ENCODE measurements at regions of chr6 and their contacts with region 1.

Region 1: DNA sequence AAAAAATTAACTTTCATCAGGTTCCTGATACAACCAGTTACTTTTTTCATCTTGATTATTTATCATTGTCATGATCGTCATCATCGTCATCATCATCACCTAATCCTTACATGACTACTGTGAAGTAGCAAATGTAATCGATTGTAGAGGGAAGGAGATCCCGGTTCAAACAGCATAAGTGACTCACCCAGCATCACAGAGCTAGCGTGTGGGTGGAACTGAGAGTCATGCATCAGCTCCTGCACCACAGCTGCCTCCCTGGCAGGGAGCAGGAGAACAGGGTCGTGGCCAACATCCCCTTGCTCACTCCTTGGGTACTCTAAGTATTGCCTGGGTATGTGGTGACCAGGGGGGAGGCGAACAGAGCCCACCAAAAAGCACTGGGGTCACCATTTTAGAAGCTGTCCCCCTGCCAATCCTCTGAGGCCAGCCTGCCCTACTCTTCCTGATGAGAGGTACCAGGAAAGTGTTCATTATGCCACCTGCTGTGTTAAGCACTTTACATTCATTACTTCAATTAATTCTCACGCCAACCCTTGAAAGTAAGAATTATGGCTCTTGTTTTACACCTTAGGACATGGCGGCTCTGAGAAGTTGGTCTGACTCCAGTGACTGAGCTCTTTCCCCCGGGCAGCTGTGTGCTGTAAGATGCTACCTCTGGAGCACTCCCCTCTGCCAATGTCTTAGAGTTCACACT is 425.2 kb downstream of the CD83 start:
- DNase-seq: peak; percentile 92
- H3K4me3 Mint-ChIP-seq: no peak overlapping the region
- H3K27ac Mint-ChIP-seq: peak overlapping the region; percentile 64
- H3K4me1 Mint-ChIP-seq: peaks cover 24% of the 10 kb centered on the region
- H3K27me3 Mint-ChIP-seq: no peaks in the 10 kb centered on the region

Region 2: GRCh38 chr6:14276667-14277404 is 266.0 kb before region 1 on chr6:
- CTCF ChIA-PET with region 1: no interaction called
- intact Hi-C with region 1: loop called (anchors 1 kb)
- DNase-seq: peak; percentile 63
- H3K4me3 Mint-ChIP-seq: peak overlapping the region; percentile 40
- H3K27ac Mint-ChIP-seq: peak overlapping the region; percentile 85
- H3K4me1 Mint-ChIP-seq: peaks cover 37% of the 10 kb centered on the region
- H3K27me3 Mint-ChIP-seq: no peaks in the 10 kb centered on the region

Region 3: DNA sequence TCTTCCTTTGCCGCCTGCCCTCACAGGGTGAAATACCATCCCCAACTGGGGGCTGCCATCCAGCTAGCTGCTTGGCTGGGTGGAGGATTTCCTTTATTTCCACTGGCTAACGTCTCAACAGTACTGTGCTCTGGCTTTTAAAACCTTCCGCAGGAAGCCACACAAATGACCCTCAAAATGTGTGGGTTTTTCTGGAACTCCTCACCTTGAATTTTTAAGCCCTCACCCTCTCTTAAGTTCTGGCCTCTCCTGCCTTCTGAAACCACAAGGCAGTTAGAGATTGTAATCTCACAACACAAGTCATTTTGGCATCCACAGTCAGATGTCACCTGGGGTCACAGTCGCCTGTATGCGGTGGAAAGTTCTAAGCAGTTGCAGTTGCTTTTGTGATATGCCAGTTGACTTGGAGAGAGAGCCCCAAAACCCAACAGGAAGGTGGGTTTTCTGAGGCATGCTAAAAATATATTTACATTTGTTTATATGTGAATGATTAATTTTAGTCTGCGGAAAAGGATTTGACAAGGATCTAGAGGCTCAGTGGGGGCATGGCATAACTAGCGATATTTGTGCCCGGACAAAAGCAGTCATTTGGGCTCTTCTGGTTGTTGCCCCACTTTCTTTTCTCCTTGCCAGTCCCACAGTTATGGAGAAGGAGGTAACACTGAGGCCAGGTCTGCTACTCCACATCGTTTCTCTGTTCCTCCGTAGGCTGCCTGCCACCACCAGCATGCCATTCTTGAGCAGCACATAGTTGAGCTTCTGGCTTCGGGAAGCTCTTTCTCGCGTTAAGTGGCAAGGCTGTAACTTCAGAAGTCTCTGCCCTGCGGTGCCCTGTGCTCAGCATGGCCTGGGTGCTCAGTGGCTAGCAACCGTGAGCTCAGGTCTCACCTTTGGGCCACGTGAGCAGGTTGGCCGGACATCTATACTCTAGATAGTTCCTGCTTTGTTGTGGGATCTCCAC is 90.0 kb before region 1 on chr6:
- CTCF ChIA-PET with region 1: no interaction called
- intact Hi-C with region 1: loop called (anchors 2 kb)
- DNase-seq: peak; percentile 79
- H3K4me3 Mint-ChIP-seq: no peak overlapping the region
- H3K27ac Mint-ChIP-seq: no peak overlapping the region
- H3K4me1 Mint-ChIP-seq: peaks cover 53% of the 10 kb centered on the region
- H3K27me3 Mint-ChIP-seq: peaks cover 1% of the 10 kb centered on the region

Region 4: GRCh38 chr6:14524319-14524718 is 18.5 kb before region 1 on chr6:
- CTCF ChIA-PET with region 1: no interaction called
- intact Hi-C with region 1: no loop called
- DNase-seq: no peak
- H3K4me3 Mint-ChIP-seq: no peak overlapping the region
- H3K27ac Mint-ChIP-seq: no peak overlapping the region
- H3K4me1 Mint-ChIP-seq: no peaks in the 10 kb centered on the region
- H3K27me3 Mint-ChIP-seq: no peaks in the 10 kb centered on the region

Region 5: GRCh38 chr6:14660806-14661579 is 118.2 kb after region 1 on chr6:
- CTCF ChIA-PET with region 1: no interaction called
- intact Hi-C with region 1: loop called (anchors 5 kb)
- DNase-seq: peak; percentile 71
- H3K4me3 Mint-ChIP-seq: no peak overlapping the region
- H3K27ac Mint-ChIP-seq: no peak overlapping the region
- H3K4me1 Mint-ChIP-seq: peaks cover 44% of the 10 kb centered on the region
- H3K27me3 Mint-ChIP-seq: no peaks in the 10 kb centered on the region

Region 6: GRCh38 chr6:14674458-14674857 is 131.6 kb after region 1 on chr6:
- CTCF ChIA-PET with region 1: no interaction called
- intact Hi-C with region 1: loop called (anchors 1 kb)
- DNase-seq: peak; percentile 12
- H3K4me3 Mint-ChIP-seq: no peak overlapping the region
- H3K27ac Mint-ChIP-seq: peak overlapping the region; percentile 80
- H3K4me1 Mint-ChIP-seq: peaks cover 19% of the 10 kb centered on the region
- H3K27me3 Mint-ChIP-seq: no peaks in the 10 kb centered on the region